ENCODE measurements at regions of chr1 and their contacts with region 1.

Region 1: DNA sequence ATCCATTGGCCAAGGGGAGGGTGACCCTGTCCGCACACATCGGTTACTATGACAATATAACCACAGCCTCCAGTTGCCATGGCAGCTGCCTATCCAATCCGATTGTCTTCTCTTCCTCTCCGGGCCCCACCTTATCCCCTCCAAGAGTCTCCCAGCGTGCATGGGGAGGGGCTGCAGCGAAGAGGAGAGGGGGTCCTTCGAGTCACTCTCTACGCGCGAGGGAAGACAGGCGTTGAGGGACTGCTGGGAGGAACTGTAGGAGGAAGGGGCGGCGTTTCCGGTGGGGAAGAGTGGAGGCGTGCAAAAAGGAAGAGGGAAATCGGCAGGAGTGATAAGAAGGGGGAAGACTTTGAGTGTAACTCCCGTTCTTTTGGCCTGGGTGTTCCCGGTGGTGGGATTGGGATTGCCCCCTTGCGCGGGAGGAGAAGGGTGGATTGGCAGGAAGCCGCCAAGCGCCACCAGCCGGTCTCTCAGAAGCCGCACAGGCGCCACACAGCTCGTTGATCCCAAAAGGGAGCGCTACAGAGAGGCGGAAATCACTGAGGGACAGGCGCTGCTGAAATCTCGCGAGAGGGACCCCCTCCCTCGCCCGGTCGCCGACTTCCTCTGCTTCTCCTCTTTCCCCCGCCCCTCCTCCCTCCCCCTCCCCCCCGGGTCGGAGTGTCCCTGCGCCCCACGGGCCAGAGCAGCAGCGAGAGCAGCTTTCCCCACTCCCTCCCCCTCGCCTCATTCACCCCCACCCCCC is 384 bp upstream of the SMG7 start:
- DNase-seq: peak; percentile 98 to 99 (median 99)
- ATAC-seq: peak; percentile 89 to 92
- H3K4me3 ChIP-seq: peak overlapping the region; percentile 90
- H3K27ac ChIP-seq: peak overlapping the region; percentile 97
- H3K4me1 ChIP-seq: peaks cover 2% of the 10 kb centered on the region
- H3K27me3 ChIP-seq: no peaks in the 10 kb centered on the region

Region 2: GRCh38 chr1:183543619-183544204 is 71.8 kb after region 1 on chr1:
- intact Hi-C with region 1: loop called in 1 of 4 experiments (anchors 10 kb)
- DNase-seq: no peak
- ATAC-seq: peak; percentile 76 to 82
- H3K4me3 ChIP-seq: no peak overlapping the region
- H3K27ac ChIP-seq: no peak overlapping the region
- H3K4me1 ChIP-seq: peaks cover 5% of the 10 kb centered on the region
- H3K27me3 ChIP-seq: no peaks in the 10 kb centered on the region

Region 3: DNA sequence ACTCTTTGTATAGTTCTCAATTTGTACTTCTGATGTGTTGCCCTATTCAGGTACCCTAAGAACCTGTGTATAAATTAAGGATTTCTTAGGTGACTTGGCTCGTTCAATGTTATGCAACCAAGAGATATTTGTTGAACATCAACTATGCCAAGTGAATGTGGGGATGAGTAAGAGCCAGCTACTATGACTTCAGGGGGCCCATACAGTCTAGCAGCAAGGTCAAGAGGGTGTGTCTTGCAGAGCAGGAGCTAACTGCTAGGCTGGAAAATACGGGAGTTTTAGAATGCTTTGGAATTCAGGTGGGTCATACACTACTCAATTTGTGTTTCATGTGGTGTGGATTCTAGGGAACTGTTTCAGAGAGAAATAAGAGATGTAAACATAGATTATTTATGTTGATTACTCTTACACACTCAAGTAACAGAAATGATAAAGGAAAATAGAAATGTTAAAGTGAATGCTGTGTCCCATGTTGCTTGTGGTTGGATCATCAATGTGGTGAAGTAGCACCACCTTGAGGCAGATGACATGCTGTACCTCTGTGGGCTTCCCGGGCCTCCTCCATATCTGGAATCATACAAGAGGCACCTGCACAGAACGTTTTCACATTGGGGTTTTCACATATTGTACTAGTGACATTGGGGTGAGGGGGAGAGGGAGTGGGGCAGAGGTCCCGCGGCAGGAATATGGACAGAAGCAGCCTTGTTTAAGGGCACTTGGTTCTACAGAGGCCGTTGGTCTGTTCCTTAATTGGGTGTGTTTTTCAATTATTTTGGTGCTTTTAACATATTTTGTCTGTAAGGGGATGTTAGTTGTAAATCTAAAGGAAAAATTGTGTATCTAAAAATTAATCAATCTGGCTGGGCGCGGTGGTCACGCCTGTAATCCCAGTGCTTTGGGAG is 151.2 kb after region 1 on chr1:
- intact Hi-C with region 1: loop called in 1 of 4 experiments (anchors 5 kb)
- DNase-seq: peak in 2 of 3 donors; percentile 50 to 67
- ATAC-seq: peak; percentile 87
- H3K4me3 ChIP-seq: no peak overlapping the region
- H3K27ac ChIP-seq: no peak overlapping the region
- H3K4me1 ChIP-seq: peaks cover 2% of the 10 kb centered on the region
- H3K27me3 ChIP-seq: no peaks in the 10 kb centered on the region

Region 4: DNA sequence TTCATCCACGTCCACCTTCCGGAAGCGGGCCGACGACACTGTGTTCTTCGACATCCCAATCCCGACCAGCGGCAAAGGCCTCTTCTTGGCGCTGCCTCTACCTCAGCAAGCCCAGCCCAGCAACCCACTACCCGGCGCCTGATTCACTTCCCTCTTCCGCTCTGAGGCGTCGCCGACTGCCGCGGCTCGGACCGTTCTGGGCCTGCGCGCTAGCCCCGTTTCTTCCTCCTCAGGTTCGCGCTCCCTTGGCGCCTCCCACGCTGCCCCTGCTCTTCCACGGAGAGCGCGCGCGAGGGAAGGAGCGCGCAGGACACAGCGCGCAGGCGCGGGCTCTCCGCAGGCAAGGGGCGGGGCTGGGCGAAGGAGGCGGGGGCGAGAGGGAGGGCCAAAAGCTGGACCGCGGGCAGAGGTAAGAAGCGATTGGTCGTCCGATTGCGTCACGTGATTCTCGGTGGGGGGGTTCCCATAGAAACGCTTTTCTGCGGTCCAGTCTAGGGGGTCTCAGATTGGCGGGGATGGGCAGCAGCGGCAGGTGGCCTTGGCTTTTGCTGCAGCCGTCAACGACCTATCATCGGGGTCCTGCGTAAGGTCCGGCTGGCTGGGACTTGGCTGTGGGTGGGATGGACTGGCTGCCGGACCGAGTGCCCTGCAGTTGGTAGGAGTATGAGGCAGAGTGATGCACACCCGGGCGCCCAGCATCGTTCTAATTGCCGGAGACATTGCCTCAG is 163.9 kb after region 1 on chr1 and contains the start of gene ARPC5:
- intact Hi-C with region 1: loop called in 1 of 4 experiments (anchors 10 kb)
- DNase-seq: peak; percentile 98 to 99 (median 99)
- ATAC-seq: peak; percentile 98
- H3K4me3 ChIP-seq: peak within 1 kb of the TSS; percentile 77
- H3K27ac ChIP-seq: peak within 1 kb of the TSS; percentile 93
- H3K4me1 ChIP-seq: peaks cover 2% of the 10 kb centered on the region
- H3K27me3 ChIP-seq: no peaks in the 10 kb centered on the region
- total RNA-seq, gene ARPC5: 36.5 to 74.7 (median 52.4) TPM